Heart left ventricle (tissue), 16 donors: ENCODE measurements at regions of chr5 and their contacts with region 1.

Region 1: GRCh38 chr5:141878711-141879425 is 658 bp upstream of the PCDH1 start:
- DNase-seq: peak; percentile 89 to 95 (median 91)
- ATAC-seq: peak; percentile 70 to 87 (median 84)
- H3K4me3 ChIP-seq: peak overlapping the region; percentile 11 to 95 (median 80)
- H3K27ac ChIP-seq: peak overlapping the region; percentile 76 to 94 (median 90)
- H3K4me1 ChIP-seq: peaks cover 0 to 88% (median 60%) of the 10 kb centered on the region in 12 donors
- H3K27me3 ChIP-seq: peaks cover 3 to 91% (median 32%) of the 10 kb centered on the region in 9 donors
- CTCF ChIP-seq: peak; percentile 97 to 99 (median 98)
- POLR2A ChIP-seq: no peak

Region 2: DNA sequence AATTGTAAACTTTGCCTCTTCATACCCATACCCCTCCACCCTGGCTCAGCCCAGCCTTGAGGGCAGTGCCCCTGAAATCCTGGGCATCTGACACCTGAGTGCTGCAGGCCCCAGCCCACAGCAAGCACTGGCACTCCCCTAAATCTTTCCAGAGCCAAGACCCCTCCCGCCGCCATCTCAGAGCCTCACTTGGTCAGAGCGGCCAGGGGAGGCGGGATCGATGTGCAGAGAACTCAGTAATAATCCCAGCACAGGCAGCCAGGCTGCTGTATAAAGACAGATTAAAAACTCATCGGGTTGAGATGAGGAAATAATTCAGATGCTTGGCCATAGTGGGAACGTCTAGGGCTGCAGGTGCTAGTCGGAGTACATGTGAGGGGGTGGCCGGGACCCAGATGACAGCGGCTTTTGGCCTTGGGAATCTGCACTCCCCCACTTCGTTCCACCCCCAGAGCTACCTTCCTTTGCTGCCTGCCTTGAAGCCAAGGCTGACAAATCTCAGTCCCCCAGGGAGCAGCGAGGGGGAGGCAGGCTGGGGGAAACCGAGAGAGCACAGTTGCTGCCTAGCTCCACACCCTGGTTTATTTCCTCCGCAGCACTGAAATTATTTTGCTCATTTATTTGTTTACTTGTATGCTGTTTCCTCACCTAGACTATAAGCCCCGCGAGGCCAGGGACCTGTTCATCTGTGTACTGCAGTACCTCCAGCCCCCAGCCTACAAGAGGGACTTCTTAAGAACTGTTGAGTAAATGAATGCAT is 177.3 kb before region 1 on chr5:
- intact Hi-C with region 1: loop called (anchors 1 to 5 kb)
- DNase-seq: peak in 2 of 5 donors; percentile 48 to 52
- ATAC-seq: peak in 3 of 4 donors; percentile 19 to 47 (median 20)
- H3K4me3 ChIP-seq: peak overlapping the region in 8 of 12 donors; percentile 49 to 65 (median 58)
- H3K27ac ChIP-seq: peak overlapping the region in 4 of 12 donors; percentile 3 to 50 (median 22)
- H3K4me1 ChIP-seq: peaks cover 0 to 23% (median 15%) of the 10 kb centered on the region in 12 donors
- H3K27me3 ChIP-seq: peaks cover 0 to 39% (median 17%) of the 10 kb centered on the region in 9 donors
- CTCF ChIP-seq: no peak
- POLR2A ChIP-seq: no peak

Region 3: GRCh38 chr5:141762790-141763368 is 116.0 kb before region 1 on chr5:
- intact Hi-C with region 1: loop called in 6 of 10 experiments (anchors 2 to 5 kb)
- DNase-seq: peak in 3 of 5 donors; percentile 10 to 45 (median 42)
- ATAC-seq: peak; percentile 40 to 89 (median 56)
- H3K4me3 ChIP-seq: no peak overlapping the region
- H3K27ac ChIP-seq: no peak overlapping the region
- H3K4me1 ChIP-seq: peaks cover 0 to 29% (median 16%) of the 10 kb centered on the region in 12 donors
- H3K27me3 ChIP-seq: peaks cover 0 to 24% (median 8%) of the 10 kb centered on the region in 9 donors
- CTCF ChIP-seq: peak in 7 of 12 donors; percentile 19 to 46 (median 24)
- POLR2A ChIP-seq: no peak

Region 4: DNA sequence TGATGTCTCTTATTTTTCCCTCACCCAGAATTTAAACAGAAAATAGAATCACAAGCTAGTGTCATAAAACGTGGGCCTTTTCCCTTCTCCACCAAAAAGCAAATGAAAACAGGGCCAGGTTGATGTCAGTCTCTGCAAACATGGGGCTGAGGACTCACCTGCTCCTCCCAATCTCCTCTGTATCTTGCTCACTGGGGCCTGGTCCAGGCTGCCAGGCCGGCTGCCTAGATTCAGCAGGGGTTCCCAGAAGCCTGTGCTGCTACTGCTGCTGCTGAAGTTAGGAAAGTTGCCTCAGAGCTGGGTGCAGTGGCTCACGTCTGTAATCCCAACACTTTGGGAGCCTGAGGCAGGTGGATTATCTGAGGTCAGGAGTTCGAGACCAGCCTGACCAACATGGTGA is 85.0 kb before region 1 on chr5:
- intact Hi-C with region 1: no loop called
- DNase-seq: no peak
- ATAC-seq: no peak
- H3K4me3 ChIP-seq: no peak overlapping the region
- H3K27ac ChIP-seq: no peak overlapping the region
- H3K4me1 ChIP-seq: no peaks in the 10 kb centered on the region
- H3K27me3 ChIP-seq: no peaks in the 10 kb centered on the region
- CTCF ChIP-seq: no peak
- POLR2A ChIP-seq: no peak

Region 5: DNA sequence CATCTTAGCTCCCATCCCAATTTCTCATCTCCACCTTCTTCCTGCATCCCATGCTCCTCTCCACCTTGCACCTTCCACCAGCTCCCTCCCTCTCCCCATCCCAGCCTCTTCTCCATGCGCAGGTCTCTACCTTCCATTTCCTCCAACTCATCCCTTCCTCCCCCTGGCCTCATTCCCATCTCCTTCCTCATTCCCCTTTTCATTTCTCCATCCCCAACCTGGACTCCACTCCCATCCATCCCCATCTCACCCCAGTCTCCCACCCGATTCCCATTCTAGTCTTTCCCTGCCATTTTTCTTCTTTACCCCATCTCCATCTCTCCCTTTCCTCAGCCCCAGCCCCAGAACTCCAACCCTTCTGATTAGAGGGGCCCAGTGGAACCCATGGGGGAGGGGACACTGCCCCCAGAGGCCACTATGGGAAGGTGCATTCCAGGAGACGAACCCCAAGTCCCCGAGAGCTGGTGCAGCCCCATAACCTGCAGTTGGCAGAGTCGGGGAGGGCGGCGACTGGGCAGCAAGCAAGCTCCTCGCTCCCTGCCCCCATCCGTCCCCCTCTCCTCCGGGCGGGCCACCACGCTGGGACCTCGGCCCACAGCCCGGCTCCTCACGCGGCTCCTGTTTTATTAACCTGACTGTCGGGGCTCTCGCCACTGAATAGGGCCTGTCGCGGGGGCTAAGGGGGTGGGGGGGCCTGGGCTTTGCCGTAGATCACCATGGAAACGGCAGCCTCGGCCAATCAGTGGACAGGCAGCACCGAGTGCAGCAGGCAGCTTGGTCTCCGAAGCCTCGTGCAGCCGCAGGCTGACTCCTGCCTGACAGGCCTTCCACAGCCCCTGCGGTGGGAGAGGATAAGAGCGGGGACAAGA is 67.3 kb before region 1 on chr5:
- intact Hi-C with region 1: loop called in 9 of 10 experiments (anchors 2 to 10 kb)
- DNase-seq: no peak
- ATAC-seq: peak in 1 of 4 donors; percentile 17
- H3K4me3 ChIP-seq: no peak overlapping the region
- H3K27ac ChIP-seq: peak overlapping the region in 1 of 12 donors; percentile 53
- H3K4me1 ChIP-seq: peaks cover 3 to 67% (median 32%) of the 10 kb centered on the region in 12 donors
- H3K27me3 ChIP-seq: peaks cover 0 to 38% (median 5%) of the 10 kb centered on the region in 9 donors
- CTCF ChIP-seq: peak in 11 of 12 donors; percentile 34 to 65 (median 50)
- POLR2A ChIP-seq: no peak

Region 6: GRCh38 chr5:141835928-141836670 is 42.8 kb before region 1 on chr5:
- intact Hi-C with region 1: loop called in 2 of 10 experiments (anchors 5 kb)
- DNase-seq: peak; percentile 73 to 85 (median 79)
- ATAC-seq: peak; percentile 64 to 81 (median 69)
- H3K4me3 ChIP-seq: peak overlapping the region in 6 of 12 donors; percentile 8 to 18 (median 16)
- H3K27ac ChIP-seq: peak overlapping the region; percentile 41 to 91 (median 76)
- H3K4me1 ChIP-seq: peaks cover 8 to 68% (median 61%) of the 10 kb centered on the region in 12 donors
- H3K27me3 ChIP-seq: peaks cover 0 to 10% (median 0%) of the 10 kb centered on the region in 9 donors
- CTCF ChIP-seq: no peak
- POLR2A ChIP-seq: no peak

Region 7: DNA sequence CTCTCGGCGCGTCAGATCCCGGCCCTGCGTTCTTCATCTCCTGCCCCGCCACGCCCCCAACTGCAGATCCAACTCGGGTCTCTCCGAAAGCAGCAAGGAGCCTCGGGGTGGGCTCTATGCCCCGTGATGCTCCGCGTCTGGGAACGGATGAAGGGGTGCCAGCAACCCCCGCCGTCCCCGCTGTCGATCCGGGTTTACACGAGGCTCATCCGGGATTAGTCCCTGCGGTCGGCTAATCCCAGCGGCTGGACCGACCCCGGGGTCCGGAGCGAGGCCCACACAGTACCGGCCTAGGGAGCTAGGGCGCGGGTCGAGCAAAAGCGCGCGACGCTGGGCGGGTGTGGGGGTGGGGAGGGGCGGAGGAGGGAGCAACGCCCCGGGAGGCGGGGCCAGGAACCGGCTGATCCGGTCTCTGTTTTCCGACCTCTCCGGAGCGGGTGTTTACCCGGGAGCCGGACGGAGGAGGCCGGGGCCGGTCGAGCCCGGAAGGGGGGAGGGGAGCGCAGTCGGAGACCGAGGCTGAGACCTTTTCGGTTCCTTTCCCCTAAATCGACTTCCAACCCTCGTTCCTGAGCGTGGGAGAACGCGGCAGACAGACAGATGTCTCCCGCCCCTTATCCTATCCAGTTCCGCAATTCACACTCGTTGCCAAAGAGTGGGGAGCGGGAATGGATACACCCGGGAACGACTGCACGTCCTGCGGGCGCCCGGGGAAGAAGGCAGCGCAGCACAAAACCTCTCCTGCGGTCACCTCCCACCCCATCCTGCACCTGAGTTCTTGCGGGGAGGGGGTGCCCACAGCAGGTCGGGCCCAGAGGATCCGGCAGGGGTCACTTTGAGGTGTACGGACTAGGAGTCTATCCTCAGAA is 29.3 kb before region 1 on chr5:
- intact Hi-C with region 1: loop called in 5 of 10 experiments (anchors 2 to 5 kb)
- DNase-seq: peak; percentile 92 to 93 (median 93)
- ATAC-seq: peak; percentile 86 to 95 (median 91)
- H3K4me3 ChIP-seq: peak overlapping the region; percentile 36 to 94 (median 74)
- H3K27ac ChIP-seq: peak overlapping the region; percentile 76 to 99 (median 96)
- H3K4me1 ChIP-seq: peaks cover 0 to 40% (median 27%) of the 10 kb centered on the region in 12 donors
- H3K27me3 ChIP-seq: no peaks in the 10 kb centered on the region
- CTCF ChIP-seq: peak in 3 of 12 donors; percentile 9 to 23 (median 10)
- POLR2A ChIP-seq: peak in 1 of 2 donors; percentile 82

Region 8: GRCh38 chr5:141960449-141961202 is 81.8 kb after region 1 on chr5:
- intact Hi-C with region 1: loop called in 9 of 10 experiments (anchors 2 to 5 kb)
- DNase-seq: peak; percentile 88 to 93 (median 89)
- ATAC-seq: peak; percentile 70 to 83 (median 77)
- H3K4me3 ChIP-seq: no peak overlapping the region
- H3K27ac ChIP-seq: peak overlapping the region in 9 of 12 donors; percentile 17 to 85 (median 58)
- H3K4me1 ChIP-seq: peaks cover 0 to 55% (median 32%) of the 10 kb centered on the region in 12 donors
- H3K27me3 ChIP-seq: no peaks in the 10 kb centered on the region
- CTCF ChIP-seq: peak; percentile 84 to 93 (median 88)
- POLR2A ChIP-seq: no peak

Region 9: DNA sequence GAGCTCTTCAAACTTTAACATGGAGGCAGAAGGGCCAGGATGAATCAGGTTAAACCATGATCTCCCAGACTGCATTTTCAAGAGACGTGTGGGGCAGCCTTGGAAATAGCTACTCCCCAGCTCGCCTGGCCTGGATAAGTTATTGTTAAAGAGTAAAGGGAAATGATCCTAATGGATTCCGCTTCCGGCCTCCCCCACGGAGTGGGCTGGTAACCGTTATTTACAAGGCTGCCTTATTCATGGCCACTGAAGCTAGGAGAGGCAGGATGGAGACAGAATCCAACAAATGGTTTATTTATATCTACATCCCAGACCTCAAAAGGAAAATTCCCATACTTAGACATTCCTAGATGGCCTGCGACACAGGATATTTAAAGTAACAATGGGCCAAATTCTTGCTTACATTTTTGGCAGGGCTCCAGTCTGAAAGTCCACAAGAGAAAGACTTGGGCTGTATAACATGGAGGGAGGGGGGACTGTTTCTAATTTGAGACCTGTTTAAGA is 418.1 kb after region 1 on chr5:
- intact Hi-C with region 1: no loop called
- DNase-seq: peak in 4 of 5 donors; percentile 50 to 82 (median 64)
- ATAC-seq: peak; percentile 58 to 84 (median 74)
- H3K4me3 ChIP-seq: no peak overlapping the region
- H3K27ac ChIP-seq: peak overlapping the region in 10 of 12 donors; percentile 2 to 76 (median 57)
- H3K4me1 ChIP-seq: peaks cover 4 to 51% (median 30%) of the 10 kb centered on the region in 12 donors
- H3K27me3 ChIP-seq: no peaks in the 10 kb centered on the region
- CTCF ChIP-seq: no peak
- POLR2A ChIP-seq: no peak

Region 10: DNA sequence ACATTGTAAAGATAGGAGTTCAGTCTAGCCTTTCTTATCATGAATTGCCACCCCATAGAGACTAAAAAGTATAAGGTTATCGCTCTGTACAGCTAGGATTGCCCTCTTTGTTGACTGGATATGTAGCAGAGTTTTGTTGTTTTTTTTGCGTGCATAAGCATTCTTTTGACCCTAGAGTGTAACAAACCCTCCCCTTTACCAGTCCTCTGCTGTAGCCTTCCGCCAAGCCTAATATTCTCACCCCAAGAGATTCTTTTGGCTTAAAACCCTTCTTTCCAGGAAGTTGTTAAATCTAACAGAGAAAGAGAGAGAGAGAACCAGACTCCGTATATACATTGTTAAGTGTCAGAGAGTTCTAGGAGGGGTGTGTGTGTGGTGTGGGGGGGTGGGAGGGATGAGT is 693.1 kb after region 1 on chr5:
- intact Hi-C with region 1: no loop called
- DNase-seq: no peak
- ATAC-seq: peak in 1 of 4 donors; percentile 5
- H3K4me3 ChIP-seq: no peak overlapping the region
- H3K27ac ChIP-seq: no peak overlapping the region
- H3K4me1 ChIP-seq: peaks cover 0 to 26% (median 9%) of the 10 kb centered on the region in 12 donors
- H3K27me3 ChIP-seq: no peaks in the 10 kb centered on the region
- CTCF ChIP-seq: no peak
- POLR2A ChIP-seq: no peak